Activated T-helper 2 cell treated with anti-CD3 and anti-CD28 coated beads, Interferon-gamma antibody, Interleukin-2, Interleukin-4, amounts not matched to agents 10 μg/mL and 5 μg/mL and 100 μg/mL, durations not matched to agents 14 hours and 24 hours and 36 hours (primary cell): ENCODE measurements at regions of chr5 and their contacts with region 1.

Region 1: GRCh38 chr5:64965613-64966012 is 196.9 kb downstream of the CWC27 start:
- DNase-seq: no peak
- H3K4me3 Mint-ChIP-seq: no peak overlapping the region
- H3K27ac Mint-ChIP-seq: no peak overlapping the region
- H3K4me1 Mint-ChIP-seq: peaks cover 2% of the 10 kb centered on the region
- H3K27me3 Mint-ChIP-seq: no peaks in the 10 kb centered on the region

Region 2: DNA sequence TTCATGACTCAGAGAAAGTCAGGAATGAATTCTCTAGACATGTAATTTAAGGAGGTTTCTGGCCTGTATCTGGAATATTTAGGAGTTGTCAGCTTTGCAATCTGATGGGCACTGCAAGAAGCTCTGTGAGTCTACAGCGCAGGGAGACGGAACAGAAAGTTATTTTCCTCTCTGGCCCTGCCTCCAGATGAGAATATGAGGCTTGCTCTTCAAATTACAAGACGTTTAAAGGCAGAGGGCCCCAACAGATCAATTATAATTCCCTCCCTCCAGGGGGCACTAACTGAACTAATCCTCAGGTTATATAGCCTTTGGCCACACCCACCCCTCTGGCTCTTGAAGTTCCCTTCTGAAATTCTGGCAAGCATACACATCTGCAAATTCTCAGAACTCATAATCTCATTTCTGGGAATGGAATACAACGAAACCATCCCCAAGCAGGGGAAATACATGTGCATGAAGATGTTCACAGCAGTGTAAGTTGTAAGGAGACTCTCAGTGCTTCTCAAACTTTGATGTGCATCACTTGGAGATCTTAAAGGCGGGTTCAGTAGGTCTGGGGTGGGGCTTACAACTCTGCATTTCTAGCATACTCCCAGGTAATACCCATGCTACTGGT is 110.7 kb after region 1 on chr5:
- intact Hi-C with region 1: loop called (anchors 10 kb)
- DNase-seq: peak; percentile 55
- H3K4me3 Mint-ChIP-seq: no peak overlapping the region
- H3K27ac Mint-ChIP-seq: no peak overlapping the region
- H3K4me1 Mint-ChIP-seq: peaks cover 13% of the 10 kb centered on the region
- H3K27me3 Mint-ChIP-seq: peaks cover 26% of the 10 kb centered on the region

Region 3: GRCh38 chr5:65125591-65126541 is 160.3 kb after region 1 on chr5:
- intact Hi-C with region 1: no loop called
- DNase-seq: no peak
- H3K4me3 Mint-ChIP-seq: no peak overlapping the region
- H3K27ac Mint-ChIP-seq: no peak overlapping the region
- H3K4me1 Mint-ChIP-seq: no peaks in the 10 kb centered on the region
- H3K27me3 Mint-ChIP-seq: no peaks in the 10 kb centered on the region